CD8-positive, alpha-beta T cell (primary cell): ENCODE measurements at regions of chr6 and their contacts with region 1.

Region 1: DNA sequence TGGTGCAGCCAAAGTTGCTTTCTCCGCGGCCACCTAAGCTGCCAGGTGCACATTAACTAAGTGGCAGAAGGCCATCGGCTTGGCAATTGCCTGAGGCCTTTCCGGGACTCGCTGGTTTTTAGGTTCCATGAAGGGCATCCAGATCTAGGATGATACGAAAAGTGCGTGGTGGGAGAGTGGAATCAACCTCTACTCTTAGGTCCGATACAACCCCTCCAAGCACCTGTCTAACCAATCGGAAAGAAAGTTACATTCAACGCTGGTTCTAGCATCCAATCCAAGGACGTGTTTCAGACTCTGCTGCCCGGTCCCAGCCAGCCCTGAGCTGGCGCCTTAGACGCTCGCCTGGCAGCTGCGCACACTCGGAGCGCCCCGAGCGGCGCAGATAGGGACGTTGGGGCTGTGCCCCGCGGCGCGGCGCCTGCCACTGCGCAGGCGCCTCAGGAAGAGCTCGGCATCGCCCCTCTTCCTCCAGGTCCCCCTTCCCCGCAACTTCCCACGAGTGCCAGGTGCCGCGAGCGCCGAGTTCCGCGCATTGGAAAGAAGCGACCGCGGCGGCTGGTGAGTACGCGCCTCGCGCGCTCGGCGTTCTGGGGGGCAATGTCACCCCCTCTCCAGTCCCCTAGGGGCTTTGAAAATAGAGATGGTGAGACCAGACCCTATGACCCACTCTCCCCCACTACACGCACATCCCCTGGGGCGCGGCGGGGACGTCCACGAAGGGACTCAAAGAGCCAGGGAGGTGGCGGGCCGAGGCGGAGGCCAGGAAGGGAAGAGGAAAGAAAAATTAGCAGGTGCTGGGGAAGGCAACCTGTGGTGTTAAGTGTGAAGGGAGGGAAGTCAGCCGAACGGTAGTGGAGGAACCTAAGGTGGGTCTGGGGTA is at the start of gene ENPP4:
- DNase-seq: peak; percentile 82 to 97 (median 90)
- ATAC-seq: peak; percentile 99
- H3K4me3 ChIP-seq: peak within 1 kb of the TSS; percentile 76 to 96
- H3K4me3 Mint-ChIP-seq: peak within 1 kb of the TSS; percentile 97
- H3K27ac ChIP-seq: peak within 1 kb of the TSS; percentile 71 to 75
- H3K27ac Mint-ChIP-seq: peak within 1 kb of the TSS; percentile 96
- H3K4me1 ChIP-seq: peaks cover 22% of the 10 kb centered on the region
- H3K4me1 Mint-ChIP-seq: peaks cover 55% of the 10 kb centered on the region
- H3K27me3 ChIP-seq: no peaks in the 10 kb centered on the region
- H3K27me3 Mint-ChIP-seq: no peaks in the 10 kb centered on the region
- CTCF ChIP-seq: no peak
- total RNA-seq, gene ENPP4: 6.7 to 6.9 TPM

Region 2: GRCh38 chr6:44387346-44388133 is 1742.3 kb before region 1 on chr6 and contains the start of gene CDC5L:
- CTCF ChIA-PET with region 1: no interaction called
- POLR2A ChIA-PET with region 1: no interaction called
- intact Hi-C with region 1: loop called in 1 of 2 experiments (anchors 5 kb)
- DNase-seq: peak; percentile 78 to 99 (median 89)
- ATAC-seq: peak; percentile 83
- H3K4me3 ChIP-seq: peak within 1 kb of the TSS; percentile 67 to 96
- H3K4me3 Mint-ChIP-seq: peak within 1 kb of the TSS; percentile 98
- H3K27ac ChIP-seq: peak within 1 kb of the TSS; percentile 73 to 96
- H3K27ac Mint-ChIP-seq: peak within 1 kb of the TSS; percentile 98
- H3K4me1 ChIP-seq: peaks cover 24% of the 10 kb centered on the region
- H3K4me1 Mint-ChIP-seq: peaks cover 42% of the 10 kb centered on the region
- H3K27me3 ChIP-seq: no peaks in the 10 kb centered on the region
- H3K27me3 Mint-ChIP-seq: no peaks in the 10 kb centered on the region
- CTCF ChIP-seq: no peak
- total RNA-seq, gene CDC5L: 24.1 to 24.4 TPM

Region 3: GRCh38 chr6:46011241-46012085 is 118.4 kb before region 1 on chr6:
- CTCF ChIA-PET with region 1: no interaction called
- POLR2A ChIA-PET with region 1: no interaction called
- intact Hi-C with region 1: loop called (anchors 2 to 5 kb)
- DNase-seq: peak; percentile 27 to 90 (median 67)
- ATAC-seq: peak; percentile 84
- H3K4me3 ChIP-seq: peak overlapping the region; percentile 23 to 33
- H3K4me3 Mint-ChIP-seq: peak overlapping the region; percentile 69
- H3K27ac ChIP-seq: peak overlapping the region; percentile 29 to 67
- H3K27ac Mint-ChIP-seq: peak overlapping the region; percentile 95
- H3K4me1 ChIP-seq: peaks cover 49% of the 10 kb centered on the region
- H3K4me1 Mint-ChIP-seq: peaks cover 54% of the 10 kb centered on the region
- H3K27me3 ChIP-seq: no peaks in the 10 kb centered on the region
- H3K27me3 Mint-ChIP-seq: peaks cover under 1% of the 10 kb centered on the region
- CTCF ChIP-seq: no peak

Region 4: DNA sequence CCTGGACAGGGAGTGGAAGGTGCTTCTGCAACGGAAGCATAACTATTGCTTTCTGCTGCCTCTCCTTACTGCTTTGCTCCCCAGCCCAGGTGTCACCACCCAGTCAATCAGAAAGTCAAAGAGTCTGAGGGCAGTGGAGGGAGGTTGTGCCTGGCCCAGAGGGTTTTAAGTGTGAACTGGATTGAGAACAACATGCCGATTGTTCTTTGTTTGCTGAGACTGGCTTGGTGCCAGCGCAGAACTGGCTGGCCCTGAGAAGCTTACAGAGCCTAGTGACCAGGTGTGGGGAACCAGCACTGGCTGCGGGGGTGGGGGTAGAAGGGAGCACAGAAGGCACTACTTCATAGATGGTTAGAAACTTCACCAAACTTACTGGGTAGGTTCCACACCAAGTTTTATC is 31.2 kb before region 1 on chr6:
- CTCF ChIA-PET with region 1: no interaction called
- POLR2A ChIA-PET with region 1: no interaction called
- intact Hi-C with region 1: no loop called
- DNase-seq: no peak
- ATAC-seq: no peak
- H3K4me3 ChIP-seq: no peak overlapping the region
- H3K4me3 Mint-ChIP-seq: no peak overlapping the region
- H3K27ac ChIP-seq: no peak overlapping the region
- H3K27ac Mint-ChIP-seq: no peak overlapping the region
- H3K4me1 ChIP-seq: peaks cover 3% of the 10 kb centered on the region
- H3K4me1 Mint-ChIP-seq: peaks cover 4% of the 10 kb centered on the region
- H3K27me3 ChIP-seq: no peaks in the 10 kb centered on the region
- H3K27me3 Mint-ChIP-seq: no peaks in the 10 kb centered on the region
- CTCF ChIP-seq: no peak

Region 5: DNA sequence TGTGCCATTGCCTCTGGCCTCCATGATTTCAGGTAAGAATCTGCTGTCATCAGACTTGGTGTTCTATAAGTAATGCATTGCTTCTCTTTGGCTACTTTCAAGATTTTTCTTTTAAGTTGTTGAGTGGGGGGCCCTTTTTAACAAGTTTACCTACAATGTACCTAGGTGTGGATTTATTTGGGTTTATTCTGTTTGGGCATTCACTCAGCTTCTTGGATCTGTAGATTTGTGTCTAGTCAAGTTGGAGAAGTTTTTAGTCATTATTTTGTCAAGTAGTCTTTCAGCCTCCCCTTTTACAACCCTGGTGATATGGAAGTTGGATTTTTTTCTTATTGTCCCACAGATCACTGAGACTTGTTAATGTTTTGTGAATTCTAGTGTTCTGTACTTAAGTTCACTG is 26.8 kb after region 1 on chr6:
- CTCF ChIA-PET with region 1: no interaction called
- POLR2A ChIA-PET with region 1: no interaction called
- intact Hi-C with region 1: no loop called
- DNase-seq: no peak
- ATAC-seq: no peak
- H3K4me3 ChIP-seq: no peak overlapping the region
- H3K4me3 Mint-ChIP-seq: no peak overlapping the region
- H3K27ac ChIP-seq: no peak overlapping the region
- H3K27ac Mint-ChIP-seq: no peak overlapping the region
- H3K4me1 ChIP-seq: no peaks in the 10 kb centered on the region
- H3K4me1 Mint-ChIP-seq: no peaks in the 10 kb centered on the region
- H3K27me3 ChIP-seq: no peaks in the 10 kb centered on the region
- H3K27me3 Mint-ChIP-seq: no peaks in the 10 kb centered on the region
- CTCF ChIP-seq: no peak

Region 6: GRCh38 chr6:46170357-46171289 is 40.8 kb after region 1 on chr6 and contains the start of gene ENPP5:
- CTCF ChIA-PET with region 1: no interaction called
- POLR2A ChIA-PET with region 1: interaction called, 9 read pairs
- intact Hi-C with region 1: loop called (anchors 1 to 2 kb)
- DNase-seq: peak; percentile 39 to 90 (median 77)
- ATAC-seq: peak; percentile 96
- H3K4me3 ChIP-seq: peak within 1 kb of the TSS; percentile 80 to 83
- H3K4me3 Mint-ChIP-seq: peak within 1 kb of the TSS; percentile 86
- H3K27ac ChIP-seq: peak within 1 kb of the TSS; percentile 19 to 36
- H3K27ac Mint-ChIP-seq: peak within 1 kb of the TSS; percentile 55
- H3K4me1 ChIP-seq: peaks cover 15% of the 10 kb centered on the region
- H3K4me1 Mint-ChIP-seq: peaks cover 24% of the 10 kb centered on the region
- H3K27me3 ChIP-seq: no peaks in the 10 kb centered on the region
- H3K27me3 Mint-ChIP-seq: no peaks in the 10 kb centered on the region
- CTCF ChIP-seq: no peak
- total RNA-seq, gene ENPP5: 0.33 TPM

Region 7: DNA sequence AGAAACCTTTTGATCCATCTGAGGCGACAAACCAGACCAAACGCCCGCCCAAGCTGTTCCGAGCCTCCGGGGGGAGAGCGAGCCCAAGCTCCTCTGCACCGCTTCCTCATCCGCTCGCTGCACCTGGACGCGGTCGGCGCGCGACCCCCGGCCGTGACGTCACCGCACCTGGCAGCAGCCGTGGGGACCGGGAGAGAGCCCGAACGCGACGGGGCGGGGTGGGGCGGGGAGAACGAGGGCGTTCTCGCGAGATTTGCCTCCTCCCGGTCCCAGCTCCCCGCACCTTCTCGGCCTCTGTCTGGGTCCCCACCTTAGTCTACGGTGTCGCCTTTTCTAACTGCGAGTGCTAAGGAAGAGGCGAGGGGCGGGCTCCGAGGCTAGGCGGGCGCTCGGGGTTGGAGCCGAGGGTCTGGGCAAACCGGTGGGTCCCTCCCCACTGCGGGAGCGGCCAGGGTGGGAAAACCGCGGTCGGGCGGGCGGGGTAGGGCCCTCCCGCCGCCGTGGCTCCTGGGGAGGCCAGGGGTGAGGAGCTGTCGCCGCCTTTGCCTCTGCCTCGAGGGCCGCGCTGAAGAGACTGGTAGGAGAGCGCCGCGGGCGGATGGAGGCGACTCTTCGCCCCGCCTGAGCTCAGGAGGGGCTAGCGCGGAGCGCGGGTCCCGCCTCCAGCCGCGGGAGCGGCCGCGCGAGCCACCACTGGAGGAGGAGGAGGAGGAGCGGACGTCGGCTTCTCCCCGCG is 1347.8 kb after region 1 on chr6 and contains the start of gene CD2AP:
- CTCF ChIA-PET with region 1: no interaction called
- POLR2A ChIA-PET with region 1: no interaction called
- intact Hi-C with region 1: loop called (anchors 5 to 10 kb)
- DNase-seq: peak; percentile 86 to 97 (median 94)
- ATAC-seq: peak; percentile 82
- H3K4me3 ChIP-seq: peak within 1 kb of the TSS; percentile 68 to 76
- H3K4me3 Mint-ChIP-seq: peak within 1 kb of the TSS; percentile 97
- H3K27ac ChIP-seq: peak within 1 kb of the TSS; percentile 89 to 94
- H3K27ac Mint-ChIP-seq: peak within 1 kb of the TSS; percentile 96
- H3K4me1 ChIP-seq: peaks cover 24% of the 10 kb centered on the region
- H3K4me1 Mint-ChIP-seq: peaks cover 46% of the 10 kb centered on the region
- H3K27me3 ChIP-seq: no peaks in the 10 kb centered on the region
- H3K27me3 Mint-ChIP-seq: no peaks in the 10 kb centered on the region
- CTCF ChIP-seq: no peak
- total RNA-seq, gene CD2AP: 43.0 to 51.1 TPM

Region 8: GRCh38 chr6:47483853-47484546 is 1354.1 kb after region 1 on chr6:
- CTCF ChIA-PET with region 1: no interaction called
- POLR2A ChIA-PET with region 1: no interaction called
- intact Hi-C with region 1: loop called (anchors 5 to 10 kb)
- DNase-seq: no peak
- ATAC-seq: no peak
- H3K4me3 ChIP-seq: no peak overlapping the region
- H3K4me3 Mint-ChIP-seq: peak overlapping the region; percentile 12
- H3K27ac ChIP-seq: no peak overlapping the region
- H3K27ac Mint-ChIP-seq: no peak overlapping the region
- H3K4me1 ChIP-seq: peaks cover 34% of the 10 kb centered on the region
- H3K4me1 Mint-ChIP-seq: peaks cover 71% of the 10 kb centered on the region
- H3K27me3 ChIP-seq: no peaks in the 10 kb centered on the region
- H3K27me3 Mint-ChIP-seq: no peaks in the 10 kb centered on the region
- CTCF ChIP-seq: no peak